Activated naive CD8-positive, alpha-beta T cell treated with anti-CD3 and anti-CD28 coated beads, Interleukin-2, amount 10 ng/mL, durations not matched to agents 7 days and 5 days (primary cell): ENCODE measurements at regions of chr12 and their contacts with region 1.

Region 1: DNA sequence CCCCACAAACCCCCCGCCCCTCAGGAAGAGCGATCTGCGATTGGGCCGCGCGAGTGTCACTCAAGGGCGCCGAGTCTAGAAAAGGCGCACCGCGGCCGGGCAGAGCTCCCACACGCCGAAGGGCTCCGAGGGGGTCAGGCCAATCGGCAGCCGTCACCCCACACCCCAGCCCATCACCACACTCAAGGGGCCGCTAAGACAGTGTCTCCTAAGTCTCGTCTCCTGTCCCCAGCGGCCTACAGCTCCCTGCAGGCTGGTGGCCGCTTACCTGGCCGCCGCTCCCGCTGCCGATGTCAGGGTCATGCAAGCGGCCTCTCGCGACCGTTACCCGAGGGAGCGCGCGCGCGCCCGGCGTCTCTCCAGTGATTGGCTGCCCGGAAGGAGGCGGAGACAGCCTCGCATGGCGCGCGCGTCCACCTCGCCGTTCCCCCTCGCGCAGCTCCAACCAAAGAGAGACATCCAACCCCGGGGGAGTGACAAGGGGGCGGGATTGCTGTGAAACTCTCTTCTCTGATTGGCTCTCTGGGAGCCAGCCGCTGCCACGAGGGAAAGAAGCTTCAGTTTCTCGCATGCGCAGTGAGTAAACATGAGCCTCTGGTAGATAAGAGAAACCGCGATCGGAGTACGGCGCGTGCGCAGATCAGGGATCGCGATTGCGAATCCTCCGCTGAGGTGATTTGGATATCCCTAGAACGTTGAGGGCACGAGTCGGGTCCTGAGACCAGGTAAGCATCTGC is at the starts of genes MPHOSPH9 and MTRFR:
- DNase-seq: peak; percentile 98
- ATAC-seq: peak; percentile 86
- H3K4me3 Mint-ChIP-seq: peak within 1 kb of the TSS; percentile 100
- H3K27ac Mint-ChIP-seq: peak within 1 kb of the TSS; percentile 94
- H3K4me1 Mint-ChIP-seq: peaks cover 57% of the 10 kb centered on the region
- H3K27me3 Mint-ChIP-seq: no peaks in the 10 kb centered on the region
- total RNA-seq, gene MPHOSPH9: 121 to 131 TPM
- total RNA-seq, gene MTRFR: 41.2 to 42.1 TPM

Region 2: DNA sequence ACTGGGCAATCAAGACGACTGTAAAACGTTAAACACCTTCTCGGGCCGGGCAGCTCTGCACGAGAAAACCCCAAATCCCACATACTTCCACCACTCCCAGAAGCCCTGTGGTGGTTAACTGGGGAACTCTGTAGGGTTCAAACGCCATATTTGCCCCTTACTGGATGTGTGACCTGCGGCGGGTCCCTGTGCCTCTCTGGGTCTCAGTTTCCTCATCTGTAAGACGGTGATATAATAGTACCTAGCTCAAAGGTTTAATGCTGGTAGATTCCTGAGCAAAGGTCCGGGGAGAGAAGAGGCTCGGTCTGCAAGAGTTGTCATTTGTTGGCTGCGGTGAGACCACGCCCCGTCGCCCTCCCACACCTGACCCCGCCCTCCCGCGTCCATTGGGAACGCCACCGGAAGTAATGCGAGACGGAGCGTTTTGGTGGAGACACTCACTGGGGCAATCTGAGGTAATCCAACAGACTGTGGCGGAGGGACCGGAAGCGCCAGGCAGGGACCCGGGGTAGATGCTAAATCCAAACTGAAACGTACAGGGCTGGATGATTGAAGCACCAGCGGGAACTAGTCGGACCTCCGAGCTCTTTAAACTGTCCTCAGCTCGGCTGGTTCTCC is 258.6 kb before region 1 on chr12:
- POLR2A ChIA-PET with region 1: interaction called, 42 read pairs
- DNase-seq: peak; percentile 98
- ATAC-seq: peak; percentile 80
- H3K4me3 Mint-ChIP-seq: peak overlapping the region; percentile 94
- H3K27ac Mint-ChIP-seq: peak overlapping the region; percentile 98
- H3K4me1 Mint-ChIP-seq: peaks cover 13% of the 10 kb centered on the region
- H3K27me3 Mint-ChIP-seq: no peaks in the 10 kb centered on the region

Region 3: DNA sequence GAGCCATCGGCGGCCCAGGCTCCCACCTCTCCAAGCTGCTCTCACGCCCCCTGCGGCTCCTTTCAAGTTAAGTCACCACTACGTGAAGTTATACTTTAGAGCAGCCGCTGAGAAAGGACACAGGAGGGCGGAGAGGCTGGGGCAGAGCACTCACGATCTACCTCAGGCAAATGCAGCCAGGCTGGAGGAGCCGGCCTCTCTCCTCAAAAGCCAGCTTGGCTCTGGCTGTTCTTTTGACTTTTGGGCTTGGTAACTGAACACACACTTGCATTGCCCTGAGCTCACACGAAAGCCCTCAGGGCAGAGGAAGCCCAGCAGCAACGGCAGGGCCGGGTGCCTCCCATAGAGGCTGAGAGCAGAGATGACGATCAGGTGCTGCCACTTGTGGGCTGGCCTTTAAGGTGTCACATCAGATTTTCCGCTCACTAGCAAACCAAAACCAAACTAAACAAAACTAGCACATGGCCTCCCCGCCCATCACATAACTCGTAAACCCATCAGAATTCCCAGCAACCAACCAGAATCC is 157.3 kb before region 1 on chr12:
- POLR2A ChIA-PET with region 1: interaction called, 34 read pairs
- DNase-seq: peak; percentile 79
- ATAC-seq: peak; percentile 82
- H3K4me3 Mint-ChIP-seq: peak overlapping the region; percentile 84
- H3K27ac Mint-ChIP-seq: peak overlapping the region; percentile 97
- H3K4me1 Mint-ChIP-seq: peaks cover 45% of the 10 kb centered on the region
- H3K27me3 Mint-ChIP-seq: no peaks in the 10 kb centered on the region

Region 4: DNA sequence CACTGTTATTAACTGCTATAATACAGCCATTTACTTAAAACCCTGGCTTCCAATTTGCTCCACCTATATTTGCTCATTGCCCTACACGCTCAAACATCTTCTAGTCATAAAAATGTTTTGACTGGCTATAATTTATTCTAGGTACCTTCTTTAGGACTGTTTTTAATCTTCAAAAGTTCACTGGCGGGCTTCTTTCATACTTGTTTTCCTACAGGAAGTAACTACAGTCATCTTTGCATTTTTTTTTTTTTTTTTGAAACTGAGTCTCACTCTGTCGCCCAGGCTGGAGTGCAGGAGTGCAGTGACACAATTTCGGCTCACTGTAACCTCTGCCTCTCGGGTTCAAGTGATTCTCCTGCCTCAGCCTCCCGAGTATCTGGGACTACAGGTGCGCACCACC is 32.6 kb before region 1 on chr12:
- POLR2A ChIA-PET with region 1: interaction called, 11 read pairs
- DNase-seq: no peak
- ATAC-seq: peak; percentile 60
- H3K4me3 Mint-ChIP-seq: peak overlapping the region; percentile 32
- H3K27ac Mint-ChIP-seq: peak overlapping the region; percentile 80
- H3K4me1 Mint-ChIP-seq: peaks cover 16% of the 10 kb centered on the region
- H3K27me3 Mint-ChIP-seq: no peaks in the 10 kb centered on the region

Region 5: GRCh38 chr12:123260081-123260480 is 27.1 kb after region 1 on chr12:
- POLR2A ChIA-PET with region 1: no interaction called
- DNase-seq: no peak
- ATAC-seq: no peak
- H3K4me3 Mint-ChIP-seq: no peak overlapping the region
- H3K27ac Mint-ChIP-seq: no peak overlapping the region
- H3K4me1 Mint-ChIP-seq: peaks cover 12% of the 10 kb centered on the region
- H3K27me3 Mint-ChIP-seq: no peaks in the 10 kb centered on the region

Region 6: GRCh38 chr12:123365025-123365917 is 132.3 kb after region 1 on chr12:
- POLR2A ChIA-PET with region 1: interaction called, 21 read pairs
- DNase-seq: peak; percentile 96
- ATAC-seq: peak; percentile 83
- H3K4me3 Mint-ChIP-seq: peak overlapping the region; percentile 95
- H3K27ac Mint-ChIP-seq: peak overlapping the region; percentile 94
- H3K4me1 Mint-ChIP-seq: peaks cover 9% of the 10 kb centered on the region
- H3K27me3 Mint-ChIP-seq: no peaks in the 10 kb centered on the region